ENCODE measurements at regions of chr20 and their contacts with region 1.

Region 1: DNA sequence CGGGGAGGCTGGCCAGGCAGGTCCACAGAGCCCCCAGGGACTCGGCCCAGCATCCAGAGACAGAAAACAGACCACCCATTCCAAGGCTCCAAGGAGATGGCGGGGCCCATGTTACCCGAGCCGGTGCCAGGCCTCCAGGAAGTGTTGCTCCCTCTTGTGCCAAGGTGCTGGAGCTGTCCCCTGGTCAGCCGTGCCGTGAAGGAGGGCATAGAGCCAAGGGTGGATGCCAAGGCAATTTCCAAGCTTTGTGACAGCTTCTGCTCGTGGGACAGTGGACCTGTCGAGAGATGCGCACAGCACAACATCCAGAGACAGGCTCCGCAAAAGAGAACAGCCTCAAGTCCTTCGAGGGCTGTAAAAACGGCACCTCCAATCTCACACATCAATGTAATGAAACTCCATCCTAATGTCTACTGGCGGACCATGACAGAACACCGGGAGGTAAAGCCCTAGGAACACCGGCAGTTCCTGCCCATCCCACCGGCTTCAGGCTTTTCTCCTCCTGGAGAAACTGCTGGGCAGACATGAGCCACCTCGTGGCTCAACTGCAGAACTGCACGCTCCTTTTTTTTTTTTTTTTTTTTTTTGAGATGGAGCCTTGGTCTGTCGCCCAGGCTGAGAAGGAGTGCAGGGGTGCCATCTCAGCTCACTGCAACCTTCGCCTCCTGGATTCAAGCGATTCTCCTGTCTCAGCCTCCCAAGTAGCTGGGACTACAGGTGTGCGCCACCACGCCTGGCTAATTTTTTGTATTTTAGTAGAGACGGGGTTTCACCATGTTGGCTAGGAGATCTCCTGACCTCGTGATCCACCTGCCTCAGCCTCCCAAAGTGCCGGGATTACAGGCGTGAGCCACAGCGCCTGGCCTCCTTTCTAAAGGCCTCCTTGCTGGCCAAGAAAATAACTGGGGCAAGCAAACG is 30.9 kb upstream of the AVP start:
- DNase-seq: peak; percentile 89
- H3K4me3 ChIP-seq: no peak overlapping the region
- H3K27ac ChIP-seq: no peak overlapping the region
- H3K4me1 ChIP-seq: peaks cover 0 to 3% of the 10 kb centered on the region in 2 experiments; a peak in 1 of 4 replicates
- H3K27me3 ChIP-seq: no peaks in the 10 kb centered on the region
- CTCF ChIP-seq: peak; percentile 78
- EP300 ChIP-seq: no peak
- RAD21 ChIP-seq: peak; percentile 67

Region 2: DNA sequence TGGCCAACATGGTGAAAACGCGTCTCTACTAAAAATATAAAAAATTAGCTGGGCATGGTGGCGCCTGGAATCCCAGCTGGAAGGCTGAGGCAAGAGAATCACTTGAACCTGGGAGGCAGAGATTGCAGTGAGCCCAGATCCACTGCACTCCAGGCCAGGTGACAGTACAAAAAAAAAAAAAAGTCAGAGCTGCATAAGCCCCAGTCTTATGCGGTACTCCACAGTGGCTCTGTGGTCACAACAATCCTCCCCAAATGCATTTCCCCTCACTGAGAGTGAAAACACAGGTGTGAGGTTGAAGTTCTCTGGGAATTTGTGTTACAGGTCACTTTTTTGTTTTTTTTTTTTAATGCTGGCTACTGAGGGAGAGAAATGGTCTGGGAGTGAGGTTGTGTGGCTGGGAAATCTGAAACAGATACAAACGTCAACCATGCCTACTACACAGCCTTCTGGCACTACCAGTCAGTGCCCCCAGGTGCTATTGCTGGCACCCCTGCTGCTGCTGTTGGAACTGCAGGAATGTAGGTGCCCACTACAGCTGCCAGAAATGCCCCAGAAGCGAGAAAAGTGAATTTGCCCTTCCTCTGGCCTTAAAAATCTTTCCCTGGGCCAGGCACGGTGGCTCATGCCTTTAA is 63.9 kb before region 1 on chr20:
- CTCF ChIA-PET with region 1: interaction called, 40 read pairs
- POLR2A ChIA-PET with region 1: interaction called, 3 read pairs
- DNase-seq: no peak
- H3K4me3 ChIP-seq: no peak overlapping the region
- H3K27ac ChIP-seq: no peak overlapping the region
- H3K4me1 ChIP-seq: peaks cover 0 to 10% of the 10 kb centered on the region in 2 experiments; a peak in 1 of 4 replicates
- H3K27me3 ChIP-seq: no peaks in the 10 kb centered on the region
- CTCF ChIP-seq: no peak
- EP300 ChIP-seq: no peak
- RAD21 ChIP-seq: no peak

Region 3: GRCh38 chr20:3101737-3102574 is 13.5 kb before region 1 on chr20:
- CTCF ChIA-PET with region 1: interaction called, 12 read pairs
- POLR2A ChIA-PET with region 1: no interaction called
- DNase-seq: no peak
- H3K4me3 ChIP-seq: no peak overlapping the region
- H3K27ac ChIP-seq: no peak overlapping the region
- H3K4me1 ChIP-seq: no peaks in the 10 kb centered on the region
- H3K27me3 ChIP-seq: no peaks in the 10 kb centered on the region
- CTCF ChIP-seq: no peak
- EP300 ChIP-seq: no peak
- RAD21 ChIP-seq: no peak

Region 4: DNA sequence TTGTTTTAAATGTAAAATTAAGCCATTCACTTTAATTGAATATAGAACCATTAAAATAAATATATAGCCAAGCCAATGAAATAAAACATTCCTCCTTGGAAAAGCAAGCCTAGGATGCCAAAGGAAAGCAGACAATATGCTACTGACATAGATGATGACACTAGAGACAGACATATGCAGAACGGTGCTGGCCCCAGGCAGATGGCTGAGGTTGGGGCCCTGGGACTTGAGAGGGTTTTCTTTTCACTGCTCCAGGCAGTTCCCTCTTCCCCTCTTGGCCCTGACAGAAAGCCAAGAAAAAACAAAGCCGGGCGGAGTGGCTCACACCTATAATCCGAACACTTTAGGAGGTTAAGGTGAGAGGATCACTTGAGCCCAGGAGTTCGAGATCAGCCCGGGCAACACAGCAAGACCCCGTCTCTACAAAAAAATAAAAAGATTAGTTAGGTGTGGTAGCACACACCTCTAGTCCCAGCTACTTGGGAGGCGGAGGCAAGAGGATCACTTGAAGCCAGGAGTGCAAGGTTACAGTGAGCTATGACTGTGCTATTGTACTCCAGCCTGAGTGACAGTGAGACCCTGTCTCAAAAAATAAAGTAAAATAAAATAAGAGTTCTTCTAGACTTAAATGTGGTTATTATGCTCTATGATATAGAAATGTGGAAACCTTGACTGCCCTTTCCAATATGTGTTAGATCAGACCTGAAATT is 13.0 kb after region 1 on chr20:
- CTCF ChIA-PET with region 1: interaction called, 12 read pairs
- POLR2A ChIA-PET with region 1: no interaction called
- DNase-seq: no peak
- H3K4me3 ChIP-seq: no peak overlapping the region
- H3K27ac ChIP-seq: no peak overlapping the region
- H3K4me1 ChIP-seq: peaks cover 0 to 5% of the 10 kb centered on the region in 2 experiments; a peak in 1 of 4 replicates
- H3K27me3 ChIP-seq: no peaks in the 10 kb centered on the region
- CTCF ChIP-seq: no peak
- EP300 ChIP-seq: no peak
- RAD21 ChIP-seq: no peak

Region 5: DNA sequence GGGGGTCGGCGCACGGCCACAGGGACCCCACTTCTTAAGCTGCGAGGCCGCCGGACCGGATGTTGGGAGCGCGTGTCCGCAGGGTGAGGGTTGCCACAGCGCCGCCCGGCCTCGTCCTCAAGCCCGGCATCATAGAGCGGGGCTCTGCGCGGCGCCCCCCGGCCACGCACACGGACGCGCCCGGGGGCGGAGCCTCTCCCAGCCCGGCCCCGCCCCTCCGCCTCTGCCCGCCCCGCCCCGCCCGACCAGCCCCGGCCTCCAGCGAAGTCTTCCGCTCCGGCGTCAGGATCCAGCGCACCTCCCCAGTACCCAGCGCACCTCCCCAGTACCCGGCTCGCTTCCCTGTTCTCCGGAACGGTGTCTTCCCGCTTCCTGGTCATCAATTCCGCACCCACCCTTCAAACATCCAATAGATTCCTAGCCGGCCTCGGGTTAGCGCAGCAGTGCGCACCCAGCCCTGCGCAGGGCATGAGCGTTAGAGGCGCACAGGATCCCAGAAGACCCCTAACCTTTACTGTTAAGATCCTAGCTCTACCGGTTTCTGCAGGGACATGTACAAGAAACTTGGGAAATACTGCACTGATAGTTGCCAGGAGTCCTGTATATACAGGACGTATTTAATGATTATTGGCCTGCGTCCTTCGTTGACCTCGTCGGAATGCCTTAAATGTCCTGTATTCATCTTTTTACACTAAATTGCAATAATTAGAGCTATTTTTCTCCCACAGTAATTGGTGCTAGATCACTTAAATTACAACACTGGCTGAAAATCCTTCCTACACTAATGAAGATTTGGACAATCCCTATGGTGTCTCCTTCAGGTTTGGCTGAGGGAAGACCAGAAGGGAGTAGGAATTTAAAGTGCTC is 292.6 kb after region 1 on chr20:
- CTCF ChIA-PET with region 1: no interaction called
- POLR2A ChIA-PET with region 1: no interaction called
- DNase-seq: peak; percentile 95
- H3K4me3 ChIP-seq: peak overlapping the region; percentile 64 to 72
- H3K27ac ChIP-seq: peak overlapping the region; percentile 66 to 96; a peak in 3 of 4 replicates
- H3K4me1 ChIP-seq: peaks cover 3 to 4% of the 10 kb centered on the region in 2 experiments; a peak in 2 of 4 replicates
- H3K27me3 ChIP-seq: no peaks in the 10 kb centered on the region; the same call in 1 of the 2 replicates
- CTCF ChIP-seq: no peak
- EP300 ChIP-seq: no peak
- RAD21 ChIP-seq: no peak

Measured in SK-N-SH (cell line).